ENCODE measurements at regions of chr20 and their contacts with region 1.

Region 1: DNA sequence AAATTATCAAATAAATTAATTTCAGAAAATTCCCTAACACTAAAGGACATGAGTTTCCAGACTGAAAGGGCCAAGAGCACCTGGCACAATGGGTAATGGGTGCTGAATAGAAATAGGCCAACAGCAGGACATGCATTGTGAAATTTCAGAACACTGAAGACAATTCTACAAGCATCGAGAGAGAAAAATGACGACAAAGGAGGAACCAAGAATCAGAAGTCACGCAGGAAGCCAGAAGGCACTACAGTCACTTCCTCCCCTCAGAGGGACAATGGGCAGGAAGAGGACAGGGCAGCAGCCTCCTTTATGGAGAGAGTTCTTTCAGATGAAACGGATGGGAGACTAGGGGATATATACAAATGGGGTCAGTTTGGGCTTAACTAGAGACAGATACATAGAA is 29.6 kb downstream of the PCNA start:
- DNase-seq: peak in 4 of 7 donors; percentile 35 to 44 (median 44)
- H3K4me3 ChIP-seq: no peak overlapping the region
- H3K27ac ChIP-seq: peak overlapping the region in 3 of 5 donors; percentile 39 to 76 (median 65)
- H3K4me1 ChIP-seq: no peaks in the 10 kb centered on the region
- H3K27me3 ChIP-seq: no peaks in the 10 kb centered on the region
- CTCF ChIP-seq: no peak
- POLR2A ChIP-seq: peak in 1 of 2 donors; percentile 24

Region 2: GRCh38 chr20:5001174-5002076 is 88.8 kb before region 1 on chr20 and contains the start of gene SLC23A2:
- intact Hi-C with region 1: loop called (anchors 10 kb)
- DNase-seq: peak; percentile 33 to 66 (median 51)
- H3K4me3 ChIP-seq: peak within 1 kb of the TSS; percentile 66 to 97 (median 90)
- H3K27ac ChIP-seq: peak within 1 kb of the TSS; percentile 66 to 91 (median 89)
- H3K4me1 ChIP-seq: peaks cover 30 to 33% of the 10 kb centered on the region in 2 donors
- H3K27me3 ChIP-seq: no peaks in the 10 kb centered on the region
- CTCF ChIP-seq: no peak
- POLR2A ChIP-seq: peak in 1 of 2 donors; percentile 38
- total RNA-seq, gene SLC23A2: 98.1 to 294 (median 148) TPM

Region 3: GRCh38 chr20:5041433-5041832 is 48.8 kb before region 1 on chr20:
- intact Hi-C with region 1: loop called in 1 of 2 experiments (anchors 10 kb)
- DNase-seq: no peak
- H3K4me3 ChIP-seq: no peak overlapping the region
- H3K27ac ChIP-seq: no peak overlapping the region
- H3K4me1 ChIP-seq: peaks cover 0 to 5% of the 10 kb centered on the region in 2 donors
- H3K27me3 ChIP-seq: no peaks in the 10 kb centered on the region
- CTCF ChIP-seq: no peak
- POLR2A ChIP-seq: no peak